Activated B cell treated with CpG ODN at 0.5 μM for 24 hours (primary cell): ENCODE measurements at regions of chr14 and their contacts with region 1.

Region 1: DNA sequence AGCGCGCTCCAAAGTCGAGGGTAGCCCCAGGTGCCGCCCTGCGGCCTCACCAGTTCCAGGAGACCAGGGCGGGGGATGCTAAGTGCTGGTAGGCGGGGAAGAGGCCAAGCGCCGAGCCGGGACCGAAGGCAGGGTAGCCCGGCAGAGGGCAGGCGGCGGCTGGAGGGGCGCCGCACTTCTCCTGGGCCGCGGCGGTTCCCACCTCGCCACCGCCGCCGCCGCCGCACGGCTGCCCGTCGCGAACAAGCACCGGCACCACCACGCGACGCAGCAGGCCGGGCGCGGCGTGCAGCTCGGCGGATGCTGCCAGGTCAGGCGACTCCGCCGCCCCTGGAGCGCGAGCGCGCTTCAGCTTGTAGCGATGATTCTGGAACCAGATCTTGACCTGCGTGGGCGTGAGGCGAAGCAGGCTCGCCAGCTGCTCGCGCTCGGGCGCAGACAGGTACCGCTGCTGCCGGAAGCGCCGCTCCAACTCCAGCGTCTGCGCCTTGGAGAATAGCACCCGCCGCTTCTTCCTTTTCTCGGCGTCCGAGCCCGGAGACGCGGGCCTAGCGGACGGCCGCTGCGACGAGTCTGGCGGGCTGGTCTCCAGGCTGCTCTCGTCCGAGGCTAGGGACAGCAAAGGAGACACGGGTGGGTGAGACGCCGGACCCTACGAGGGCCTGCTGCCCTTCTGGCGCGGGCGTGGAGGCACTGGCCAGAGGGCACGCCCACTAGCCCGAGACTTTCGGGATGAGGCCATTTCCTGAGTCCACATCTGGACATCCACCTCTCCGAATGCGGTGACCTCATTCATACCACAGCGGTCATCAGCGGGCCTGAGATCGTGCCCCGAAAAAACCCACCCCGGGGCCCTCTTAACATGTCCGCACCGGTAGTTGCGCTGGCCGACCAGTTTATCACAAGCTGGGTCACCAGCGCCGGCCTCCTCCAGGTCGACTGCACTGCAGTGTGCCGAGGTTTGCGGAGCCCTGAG is 1.3 kb downstream of the NKX2-8 start:
- DNase-seq: no peak
- ATAC-seq: no peak
- H3K4me3 Mint-ChIP-seq: no peak overlapping the region
- H3K27ac Mint-ChIP-seq: no peak overlapping the region
- H3K4me1 Mint-ChIP-seq: no peaks in the 10 kb centered on the region
- H3K27me3 Mint-ChIP-seq: peaks cover 46% of the 10 kb centered on the region
- CTCF ChIP-seq: no peak

Region 2: DNA sequence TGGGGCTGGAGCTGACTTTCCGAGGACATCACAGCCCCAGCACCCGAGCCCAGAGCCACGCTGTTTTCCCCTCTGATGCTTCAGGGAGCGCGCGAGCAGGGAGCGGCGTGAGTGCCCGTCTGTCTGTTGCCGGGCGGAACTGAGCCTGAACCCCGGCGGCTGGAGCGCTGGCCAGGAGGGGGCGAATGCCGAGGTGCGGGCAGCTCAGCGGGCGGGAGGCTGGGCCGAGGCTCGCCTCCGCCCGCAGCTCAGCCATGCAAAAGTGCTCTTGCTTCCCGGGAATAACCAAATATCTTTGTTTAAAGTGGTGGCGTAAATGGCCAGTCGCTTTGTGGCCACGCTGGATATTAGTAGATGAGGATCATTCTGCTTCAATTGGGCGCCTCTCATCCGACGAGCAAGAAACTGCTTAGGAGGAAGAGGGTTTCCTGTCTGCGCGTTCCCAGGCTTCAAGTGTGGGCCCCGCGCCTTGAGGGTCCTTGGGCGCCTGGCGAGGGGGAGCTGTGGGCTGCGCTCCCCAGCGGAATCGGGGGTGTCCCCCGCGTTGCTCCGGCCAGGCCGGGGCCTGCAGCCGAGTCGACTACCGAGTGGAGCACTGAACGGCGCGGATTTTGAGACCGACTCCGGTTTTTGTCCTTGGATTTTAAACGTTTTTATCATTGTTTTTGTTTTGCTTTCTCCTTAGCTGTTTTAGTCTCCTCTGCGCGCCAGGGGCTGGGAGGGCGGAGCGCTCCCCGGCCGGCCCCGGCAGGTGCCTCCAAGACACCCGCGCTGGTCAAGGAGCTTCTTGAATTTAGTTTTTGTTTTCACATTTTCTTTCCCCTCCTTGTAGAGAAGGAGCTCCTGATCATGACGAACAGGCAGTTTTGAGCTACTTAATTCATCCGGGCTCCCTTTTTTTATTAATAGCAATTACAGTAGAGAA is 60.3 kb before region 1 on chr14:
- CTCF ChIA-PET with region 1: no interaction called
- POLR2A ChIA-PET with region 1: no interaction called
- intact Hi-C with region 1: loop called (anchors 10 kb)
- DNase-seq: no peak
- ATAC-seq: no peak
- H3K4me3 Mint-ChIP-seq: no peak overlapping the region
- H3K27ac Mint-ChIP-seq: no peak overlapping the region
- H3K4me1 Mint-ChIP-seq: peaks cover 7% of the 10 kb centered on the region
- H3K27me3 Mint-ChIP-seq: peaks cover 50% of the 10 kb centered on the region
- CTCF ChIP-seq: no peak